Heart left ventricle (tissue), 16 donors: ENCODE measurements at regions of chr14 and their contacts with region 1.

Region 1: GRCh38 chr14:74945823-74946682 is 9.3 kb downstream of the PGF start:
- DNase-seq: peak; percentile 75 to 88 (median 80)
- ATAC-seq: peak; percentile 74 to 83 (median 80)
- H3K4me3 ChIP-seq: peak overlapping the region in 1 of 12 donors; percentile 18
- H3K27ac ChIP-seq: peak overlapping the region in 7 of 12 donors; percentile 31 to 48 (median 37)
- H3K4me1 ChIP-seq: peaks cover 0 to 55% (median 34%) of the 10 kb centered on the region in 12 donors
- H3K27me3 ChIP-seq: no peaks in the 10 kb centered on the region
- CTCF ChIP-seq: peak; percentile 87 to 96 (median 94)
- POLR2A ChIP-seq: no peak

Region 2: DNA sequence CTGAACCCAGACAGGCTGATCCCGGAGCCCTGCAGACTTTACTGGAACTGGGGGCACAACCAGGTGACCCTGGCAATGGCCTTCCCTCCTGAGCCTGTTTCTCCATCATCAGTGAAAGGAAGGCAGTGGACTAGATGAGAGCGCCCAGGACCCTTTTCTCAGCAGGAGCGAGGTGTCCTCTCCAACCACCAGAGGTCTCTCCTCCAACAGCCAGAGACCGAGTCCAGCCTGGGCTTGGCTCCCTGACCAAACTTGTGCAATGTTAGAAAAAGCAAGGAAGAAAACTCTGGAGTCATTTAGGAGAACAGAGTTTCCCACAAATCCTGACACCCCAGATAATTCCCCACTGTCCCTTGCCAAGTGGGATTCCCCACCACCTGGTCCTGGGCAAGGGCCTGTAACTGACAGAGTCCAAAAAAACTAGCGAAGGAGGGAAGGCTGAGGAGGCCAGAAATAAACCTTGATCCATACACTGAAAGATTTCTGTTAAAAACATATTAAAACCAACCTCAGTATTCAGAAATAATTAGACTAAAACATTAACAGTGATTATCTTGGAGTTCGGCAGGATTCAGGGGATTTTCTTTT is 32.0 kb before region 1 on chr14:
- intact Hi-C with region 1: loop called in 2 of 10 experiments (anchors 2 to 5 kb)
- DNase-seq: peak in 4 of 5 donors; percentile 75 to 78 (median 76)
- ATAC-seq: peak; percentile 44 to 68 (median 60)
- H3K4me3 ChIP-seq: no peak overlapping the region
- H3K27ac ChIP-seq: peak overlapping the region in 8 of 12 donors; percentile 23 to 70 (median 33)
- H3K4me1 ChIP-seq: peaks cover 0 to 55% (median 40%) of the 10 kb centered on the region in 12 donors
- H3K27me3 ChIP-seq: no peaks in the 10 kb centered on the region
- CTCF ChIP-seq: peak; percentile 64 to 87 (median 76)
- POLR2A ChIP-seq: no peak

Region 3: GRCh38 chr14:75002392-75003249 is 56.6 kb after region 1 on chr14 and contains the start of gene EIF2B2:
- intact Hi-C with region 1: loop called in 7 of 10 experiments (anchors 1 to 10 kb)
- DNase-seq: peak; percentile 98 to 99 (median 98)
- ATAC-seq: peak; percentile 100
- H3K4me3 ChIP-seq: peak within 1 kb of the TSS; percentile 61 to 99 (median 86)
- H3K27ac ChIP-seq: peak within 1 kb of the TSS; percentile 81 to 94 (median 89)
- H3K4me1 ChIP-seq: peaks cover 6 to 27% (median 14%) of the 10 kb centered on the region in 12 donors
- H3K27me3 ChIP-seq: no peaks in the 10 kb centered on the region
- CTCF ChIP-seq: peak in 5 of 12 donors; percentile 13 to 41 (median 14)
- POLR2A ChIP-seq: peak in 1 of 2 donors; percentile 71
- total RNA-seq, gene EIF2B2: 26.2 to 40.9 (median 30.3) TPM

Region 4: DNA sequence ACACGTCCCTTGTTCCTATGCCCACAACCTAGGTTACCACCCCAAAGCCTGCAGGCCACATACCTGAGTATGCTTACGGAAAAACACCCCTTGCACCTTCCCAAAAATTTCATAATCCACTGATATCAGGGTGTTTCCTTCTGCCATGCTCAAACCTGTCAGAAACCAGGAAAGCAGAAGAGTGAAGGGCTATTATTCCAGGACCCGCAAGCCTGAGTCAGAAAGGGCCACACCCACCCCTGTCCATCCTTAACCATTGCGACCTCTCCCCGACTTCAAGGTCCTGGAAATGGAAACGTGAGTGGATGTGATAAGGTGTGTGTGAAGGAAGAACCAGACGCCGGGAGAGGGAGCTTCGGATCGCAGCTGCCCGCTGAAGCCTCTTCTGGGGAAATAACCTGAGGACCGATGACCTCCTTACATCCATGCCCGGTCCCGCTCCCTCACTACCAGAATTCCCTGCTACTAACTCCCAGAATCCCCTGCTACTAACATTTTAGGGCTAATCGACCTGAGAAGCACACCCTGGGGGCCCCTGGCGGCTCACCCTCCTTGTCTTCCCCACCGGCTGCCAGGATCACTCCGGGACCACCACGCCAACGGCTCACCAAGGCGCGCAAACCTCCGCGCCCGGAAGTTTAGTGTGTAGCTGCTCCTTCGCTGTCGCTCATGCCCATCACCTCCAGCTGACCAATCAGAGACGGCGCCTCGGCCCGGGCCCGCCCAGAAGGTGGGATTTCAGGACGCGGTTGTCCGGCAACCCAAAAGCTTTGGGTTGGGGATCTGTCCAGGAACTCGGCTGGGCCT is 117.6 kb after region 1 on chr14 and contains the start of gene ACYP1:
- intact Hi-C with region 1: loop called in 2 of 10 experiments (anchors 5 to 10 kb)
- DNase-seq: peak; percentile 91 to 96 (median 93)
- ATAC-seq: peak; percentile 86 to 98 (median 96)
- H3K4me3 ChIP-seq: peak within 1 kb of the TSS; percentile 56 to 91 (median 74)
- H3K27ac ChIP-seq: peak within 1 kb of the TSS in 11 of 12 donors; percentile 31 to 80 (median 69)
- H3K4me1 ChIP-seq: peaks cover 0 to 45% (median 29%) of the 10 kb centered on the region in 12 donors
- H3K27me3 ChIP-seq: no peaks in the 10 kb centered on the region
- CTCF ChIP-seq: no peak
- POLR2A ChIP-seq: no peak
- total RNA-seq, gene ACYP1: 6.7 to 15.9 (median 10.9) TPM

Region 5: DNA sequence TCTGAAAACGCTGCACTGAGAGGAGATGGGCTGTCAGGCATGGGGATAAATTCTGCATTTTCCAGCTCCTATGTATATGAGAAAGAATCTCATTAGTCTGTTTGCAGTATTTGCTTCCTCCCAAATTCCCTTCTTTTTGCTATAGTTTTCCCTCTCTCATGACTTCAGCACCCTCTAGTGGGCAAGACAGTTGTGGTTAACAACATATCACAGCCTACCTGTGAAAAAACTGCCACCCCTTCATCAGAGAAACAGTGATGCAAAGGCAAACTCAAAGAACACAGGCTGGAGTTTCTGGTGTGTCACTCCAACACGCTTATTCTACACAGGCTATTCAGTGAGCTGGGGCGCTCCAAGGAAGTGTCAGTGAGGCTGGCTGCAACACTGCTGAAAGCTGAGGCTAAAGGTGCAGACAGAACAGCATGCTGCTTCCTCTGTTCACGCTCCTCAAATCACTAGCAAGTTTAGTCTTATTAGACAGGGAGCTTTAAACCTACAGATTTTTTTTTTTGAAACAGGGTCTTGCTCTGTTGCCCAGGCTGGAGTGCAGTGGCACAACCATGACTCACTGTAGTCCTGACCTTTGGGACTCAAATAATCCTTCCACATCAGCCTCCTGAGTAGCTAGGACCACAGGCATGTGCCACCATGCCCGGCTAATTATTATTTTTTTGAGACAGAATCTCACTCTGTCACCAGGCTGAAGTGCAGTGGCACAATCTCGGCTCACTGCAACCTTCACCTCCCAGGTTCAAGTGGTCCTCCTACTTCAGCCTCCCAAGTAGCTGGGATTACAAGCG is 142.7 kb after region 1 on chr14:
- intact Hi-C with region 1: loop called in 9 of 10 experiments (anchors 1 to 10 kb)
- DNase-seq: peak in 2 of 5 donors; percentile 35 to 39
- ATAC-seq: peak; percentile 36 to 71 (median 71)
- H3K4me3 ChIP-seq: no peak overlapping the region
- H3K27ac ChIP-seq: no peak overlapping the region
- H3K4me1 ChIP-seq: no peaks in the 10 kb centered on the region
- H3K27me3 ChIP-seq: no peaks in the 10 kb centered on the region
- CTCF ChIP-seq: peak; percentile 67 to 87 (median 78)
- POLR2A ChIP-seq: no peak